ENCODE measurements at regions of chr10 and their contacts with region 1.

Region 1: GRCh38 chr10:62858364-62858763 is 42.2 kb upstream of the EGR2 start:
- DNase-seq: no peak
- H3K4me3 Mint-ChIP-seq: no peak overlapping the region
- H3K27ac Mint-ChIP-seq: no peak overlapping the region
- H3K4me1 Mint-ChIP-seq: peaks cover 61% of the 10 kb centered on the region
- H3K27me3 Mint-ChIP-seq: peaks cover 9% of the 10 kb centered on the region

Region 2: DNA sequence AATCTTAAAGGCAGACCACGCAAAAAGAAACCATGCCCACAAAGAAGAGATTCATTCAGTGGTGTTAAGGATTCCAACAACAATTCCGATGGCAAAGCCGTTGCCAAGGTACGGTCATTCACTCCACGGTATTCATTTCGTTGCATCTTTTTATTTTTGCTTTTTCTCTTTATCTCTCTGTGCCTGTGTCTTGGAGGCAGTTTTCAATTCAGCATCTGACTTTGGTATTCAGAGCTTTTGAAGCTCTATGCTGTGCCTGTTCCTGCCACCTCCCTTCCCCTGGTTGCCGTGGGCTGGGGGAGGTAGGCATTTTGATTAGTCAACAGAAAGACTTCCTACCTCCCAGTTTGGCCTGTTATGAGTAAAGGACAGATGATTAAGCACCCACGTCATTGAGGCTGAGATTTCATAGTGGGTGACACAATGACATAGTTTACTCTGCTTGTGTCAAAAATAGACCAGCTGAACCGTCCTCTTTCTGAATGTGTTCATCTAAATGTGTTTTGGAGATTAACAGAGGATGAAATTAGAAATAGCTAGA is 807.4 kb before region 1 on chr10:
- CTCF ChIA-PET with region 1: no interaction called
- POLR2A ChIA-PET with region 1: no interaction called
- intact Hi-C with region 1: no loop called
- DNase-seq: peak; percentile 91
- H3K4me3 Mint-ChIP-seq: peak overlapping the region; percentile 94
- H3K27ac Mint-ChIP-seq: peak overlapping the region; percentile 96
- H3K4me1 Mint-ChIP-seq: peaks cover 71% of the 10 kb centered on the region
- H3K27me3 Mint-ChIP-seq: no peaks in the 10 kb centered on the region

Region 3: DNA sequence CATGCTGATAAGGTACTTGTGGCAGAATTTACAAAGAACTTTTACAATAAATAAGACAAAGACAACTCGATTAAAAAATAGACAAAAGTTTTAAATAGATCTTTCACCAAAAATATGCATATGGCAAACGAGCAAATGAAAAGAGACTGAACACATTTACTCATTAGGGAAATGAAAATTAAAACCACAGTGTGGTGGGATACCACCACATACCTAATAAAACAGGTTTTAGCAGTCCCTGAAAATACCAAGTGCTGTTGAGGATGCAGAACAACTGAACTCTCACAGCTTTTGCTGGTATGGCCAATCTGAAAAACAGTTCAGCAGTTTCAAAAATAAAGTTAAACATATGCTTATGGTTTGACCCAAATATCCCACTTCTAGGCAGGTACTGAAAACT is 259.2 kb before region 1 on chr10:
- CTCF ChIA-PET with region 1: no interaction called
- POLR2A ChIA-PET with region 1: no interaction called
- intact Hi-C with region 1: no loop called
- DNase-seq: no peak
- H3K4me3 Mint-ChIP-seq: no peak overlapping the region
- H3K27ac Mint-ChIP-seq: no peak overlapping the region
- H3K4me1 Mint-ChIP-seq: no peaks in the 10 kb centered on the region
- H3K27me3 Mint-ChIP-seq: no peaks in the 10 kb centered on the region

Region 4: DNA sequence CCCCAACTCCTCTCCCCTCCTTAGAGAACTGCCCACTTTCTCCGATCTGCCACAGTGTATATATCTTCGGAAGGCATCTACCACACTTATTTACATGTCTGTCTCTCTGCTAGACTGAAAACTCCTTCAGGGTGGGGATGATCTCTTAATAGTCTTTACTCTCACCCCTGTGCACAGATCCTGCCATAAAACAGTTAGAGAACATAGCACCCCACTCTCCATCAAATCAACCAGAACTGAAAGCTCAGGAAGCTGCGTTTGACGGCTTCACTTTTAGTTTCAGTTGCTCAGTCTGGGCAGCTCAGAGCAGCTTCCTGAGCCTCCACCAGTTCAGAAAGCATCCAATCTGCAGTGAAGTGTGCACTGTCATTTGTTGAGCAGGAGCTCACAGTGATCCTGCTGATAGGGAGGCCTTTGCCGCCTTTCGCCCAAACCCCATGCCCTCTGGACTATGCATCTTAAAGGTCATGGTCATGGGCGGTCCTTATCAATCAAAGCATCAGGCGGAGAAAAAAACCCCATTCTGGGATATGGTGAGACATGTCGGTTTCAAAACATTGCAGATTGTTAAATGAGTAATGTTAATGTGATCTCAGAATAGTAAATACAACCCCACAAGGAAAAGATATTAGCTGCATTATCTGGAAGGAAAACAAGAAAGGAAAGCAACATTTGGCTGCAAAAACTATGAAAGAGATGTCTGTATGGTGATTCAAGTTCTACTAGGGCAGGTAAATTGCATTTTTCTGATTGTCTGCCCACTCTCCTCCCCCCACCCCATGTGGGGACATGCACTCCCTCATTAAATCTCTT is 220.9 kb before region 1 on chr10:
- CTCF ChIA-PET with region 1: no interaction called
- POLR2A ChIA-PET with region 1: no interaction called
- intact Hi-C with region 1: loop called (anchors 1 kb)
- DNase-seq: peak; percentile 84
- H3K4me3 Mint-ChIP-seq: no peak overlapping the region
- H3K27ac Mint-ChIP-seq: no peak overlapping the region
- H3K4me1 Mint-ChIP-seq: peaks cover 26% of the 10 kb centered on the region
- H3K27me3 Mint-ChIP-seq: no peaks in the 10 kb centered on the region

Region 5: GRCh38 chr10:62755662-62756653 is 102.4 kb before region 1 on chr10:
- CTCF ChIA-PET with region 1: no interaction called
- POLR2A ChIA-PET with region 1: no interaction called
- intact Hi-C with region 1: no loop called
- DNase-seq: no peak
- H3K4me3 Mint-ChIP-seq: no peak overlapping the region
- H3K27ac Mint-ChIP-seq: peak overlapping the region; percentile 38
- H3K4me1 Mint-ChIP-seq: peaks cover 20% of the 10 kb centered on the region
- H3K27me3 Mint-ChIP-seq: no peaks in the 10 kb centered on the region

Region 6: DNA sequence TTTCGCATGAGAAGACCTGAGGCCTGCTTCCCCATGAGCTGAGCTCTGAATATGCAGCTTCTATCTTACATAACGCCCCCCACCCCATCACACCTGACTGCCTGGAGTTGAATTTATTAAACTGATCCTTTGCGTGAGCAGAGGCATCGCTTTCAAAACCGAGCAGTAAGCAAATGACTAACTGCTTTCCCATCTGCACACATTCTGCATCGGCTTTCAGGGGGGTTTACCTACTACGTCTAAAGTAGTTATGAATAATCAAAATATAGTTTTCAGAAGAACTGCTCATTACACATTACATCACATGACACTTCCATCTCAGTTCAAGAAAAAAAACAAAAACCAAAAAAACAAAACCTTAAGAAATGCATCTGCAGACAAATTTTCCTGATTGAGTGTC is 12.5 kb after region 1 on chr10:
- CTCF ChIA-PET with region 1: no interaction called
- POLR2A ChIA-PET with region 1: interaction called, 8 read pairs
- intact Hi-C with region 1: loop called (anchors 1 kb)
- DNase-seq: peak; percentile 68
- H3K4me3 Mint-ChIP-seq: no peak overlapping the region
- H3K27ac Mint-ChIP-seq: no peak overlapping the region
- H3K4me1 Mint-ChIP-seq: peaks cover 30% of the 10 kb centered on the region
- H3K27me3 Mint-ChIP-seq: peaks cover 16% of the 10 kb centered on the region

Region 7: DNA sequence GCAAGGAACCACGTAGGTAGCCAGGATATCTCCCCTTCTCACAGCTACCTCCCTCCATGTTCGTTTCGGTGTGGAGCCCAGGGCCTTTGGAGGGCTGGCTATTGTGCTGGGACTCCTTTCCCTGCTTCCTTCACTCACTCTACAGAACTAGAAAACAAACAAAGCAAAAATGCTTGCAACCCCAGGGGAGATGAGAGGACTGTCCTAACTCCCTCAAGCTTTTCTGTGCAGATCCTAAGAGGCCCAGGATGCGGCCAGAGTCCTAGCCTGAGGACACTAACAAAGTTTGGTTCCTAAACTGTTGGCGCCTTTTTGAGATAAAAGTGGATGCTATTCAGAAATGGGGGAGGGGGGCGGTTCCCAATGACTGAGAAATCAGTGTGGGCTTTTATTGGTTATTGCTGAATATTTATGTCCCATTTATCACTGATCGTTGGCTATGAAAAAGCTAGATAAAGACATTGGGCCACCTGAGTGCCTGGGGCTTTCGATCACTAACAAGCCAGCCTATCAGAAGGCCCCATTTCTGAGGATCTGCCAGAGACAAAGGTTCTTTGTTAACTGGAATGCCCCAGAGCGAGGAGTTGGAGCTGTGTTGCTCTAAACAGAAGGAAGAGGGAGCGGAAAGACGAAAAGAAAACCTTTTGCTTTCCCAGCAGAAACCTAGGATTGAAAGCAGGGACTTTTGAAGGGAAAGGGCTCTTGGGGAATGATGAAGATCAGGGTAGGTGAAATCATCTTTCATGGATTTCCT is 53.0 kb after region 1 on chr10:
- CTCF ChIA-PET with region 1: no interaction called
- POLR2A ChIA-PET with region 1: no interaction called
- intact Hi-C with region 1: loop called (anchors 5 kb)
- DNase-seq: no peak
- H3K4me3 Mint-ChIP-seq: no peak overlapping the region
- H3K27ac Mint-ChIP-seq: no peak overlapping the region
- H3K4me1 Mint-ChIP-seq: peaks cover 3% of the 10 kb centered on the region
- H3K27me3 Mint-ChIP-seq: peaks cover 11% of the 10 kb centered on the region

Region 8: DNA sequence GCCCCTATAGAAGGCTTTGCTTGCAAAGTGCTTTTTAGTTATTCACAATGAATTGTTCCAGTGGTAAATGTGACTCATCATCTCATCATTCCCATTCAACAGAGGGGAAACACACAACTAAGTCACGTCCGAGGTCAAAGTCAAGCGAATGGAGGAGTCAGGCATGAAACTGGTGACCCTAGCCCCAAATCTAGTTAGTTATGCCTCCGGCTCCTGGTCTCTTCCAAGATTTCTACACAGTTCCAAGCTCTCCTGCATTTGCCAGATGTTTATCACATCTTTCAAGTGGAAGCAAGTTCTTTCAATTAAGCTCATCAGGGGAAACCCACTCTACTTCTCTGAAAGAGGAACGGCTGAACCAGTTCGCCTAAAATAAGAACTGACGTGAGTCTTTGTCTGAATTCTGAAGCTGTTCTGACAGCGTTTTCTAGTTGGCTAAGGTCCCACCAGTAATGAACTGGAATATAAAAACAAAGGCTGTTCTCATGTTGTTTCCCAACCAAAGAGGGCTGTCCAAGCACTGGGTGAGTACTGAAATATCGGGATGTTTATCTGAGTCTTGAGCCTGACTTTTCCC is 133.9 kb after region 1 on chr10:
- CTCF ChIA-PET with region 1: no interaction called
- POLR2A ChIA-PET with region 1: interaction called, 5 read pairs
- intact Hi-C with region 1: loop called (anchors 1 kb)
- DNase-seq: peak; percentile 20
- H3K4me3 Mint-ChIP-seq: peak overlapping the region; percentile 24
- H3K27ac Mint-ChIP-seq: peak overlapping the region; percentile 84
- H3K4me1 Mint-ChIP-seq: peaks cover 54% of the 10 kb centered on the region
- H3K27me3 Mint-ChIP-seq: peaks cover 7% of the 10 kb centered on the region

Region 9: DNA sequence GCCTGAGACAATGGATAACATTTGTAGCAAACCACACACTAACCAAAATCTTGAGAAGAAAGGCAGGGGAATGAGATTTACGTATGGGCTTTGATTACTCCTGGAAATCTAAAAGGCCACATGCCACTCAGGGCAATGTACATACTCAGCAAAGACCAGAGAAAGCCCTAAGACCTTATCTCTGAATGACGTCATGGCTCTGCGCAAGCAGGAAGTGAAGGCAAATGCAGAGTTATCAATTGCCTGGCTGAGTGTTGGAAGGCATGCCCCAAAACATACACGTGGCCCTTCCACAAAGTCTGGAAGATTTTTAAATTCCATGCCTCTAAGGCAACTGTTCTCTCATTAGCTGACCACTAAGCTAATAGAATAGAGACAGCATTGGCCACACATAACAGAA is 183.9 kb after region 1 on chr10:
- CTCF ChIA-PET with region 1: no interaction called
- POLR2A ChIA-PET with region 1: no interaction called
- intact Hi-C with region 1: no loop called
- DNase-seq: no peak
- H3K4me3 Mint-ChIP-seq: no peak overlapping the region
- H3K27ac Mint-ChIP-seq: no peak overlapping the region
- H3K4me1 Mint-ChIP-seq: peaks cover 3% of the 10 kb centered on the region
- H3K27me3 Mint-ChIP-seq: peaks cover 36% of the 10 kb centered on the region

Region 10: GRCh38 chr10:63068246-63068645 is 209.9 kb after region 1 on chr10:
- CTCF ChIA-PET with region 1: interaction called, 3 read pairs
- POLR2A ChIA-PET with region 1: no interaction called
- intact Hi-C with region 1: loop called (anchors 5 kb)
- DNase-seq: peak; percentile 31
- H3K4me3 Mint-ChIP-seq: peak overlapping the region; percentile 12
- H3K27ac Mint-ChIP-seq: no peak overlapping the region
- H3K4me1 Mint-ChIP-seq: peaks cover 13% of the 10 kb centered on the region
- H3K27me3 Mint-ChIP-seq: peaks cover 51% of the 10 kb centered on the region

Measured in activated CD4-positive, alpha-beta memory T cell treated with anti-CD3 and anti-CD28 coated beads for 36 hours (primary cell).